H1 (cell line): ENCODE measurements at regions of chrX and their contacts with region 1.

Region 1: DNA sequence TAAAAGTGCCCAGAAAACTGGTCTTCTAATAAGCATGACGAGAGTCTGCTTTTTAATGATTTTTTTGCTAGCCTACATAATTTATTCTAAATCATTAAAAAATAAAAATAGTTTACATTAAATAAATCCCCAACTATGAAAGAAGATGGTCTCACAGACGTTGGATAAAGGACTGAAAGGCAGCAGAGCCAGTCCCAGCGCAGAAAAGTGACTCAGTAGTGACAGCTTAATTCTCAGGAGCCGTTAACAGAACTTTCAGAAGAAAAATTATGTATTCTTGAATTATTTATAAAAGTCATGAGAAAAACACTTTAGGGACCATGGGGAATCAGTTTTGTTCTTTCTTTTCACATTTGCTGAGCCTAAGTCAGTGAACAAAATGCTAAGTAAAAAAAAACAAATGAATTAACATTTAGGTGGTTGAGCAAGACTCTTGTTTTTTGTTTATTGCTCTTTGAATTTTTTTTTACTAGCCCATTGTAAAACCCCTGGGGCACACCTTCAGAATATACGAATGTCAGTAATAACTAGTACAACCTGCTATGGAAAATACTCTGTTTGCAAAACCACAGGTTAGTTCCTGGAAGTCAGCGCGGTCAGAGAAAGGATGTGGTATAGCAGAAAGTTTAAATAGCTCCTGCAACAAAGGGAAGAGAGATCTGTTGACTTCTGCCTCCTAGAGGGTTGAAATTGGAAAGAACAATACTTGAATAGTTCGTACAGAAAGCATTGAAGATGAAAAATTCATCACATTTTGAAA is 50.4 kb upstream of the CCDC160 start:
- DNase-seq: no peak
- H3K4me3 ChIP-seq: no peak overlapping the region
- H3K27ac ChIP-seq: no peak overlapping the region
- H3K4me1 ChIP-seq: peaks cover 0 to 8% (median 4%) of the 10 kb centered on the region in 4 experiments; a peak in 3 of 7 replicates
- H3K27me3 ChIP-seq: no peaks in the 10 kb centered on the region; a peak in 1 of 7 replicates
- CTCF ChIP-seq: no peak
- EP300 ChIP-seq: no peak
- POLR2A ChIP-seq: no peak
- RAD21 ChIP-seq: no peak

Region 2: DNA sequence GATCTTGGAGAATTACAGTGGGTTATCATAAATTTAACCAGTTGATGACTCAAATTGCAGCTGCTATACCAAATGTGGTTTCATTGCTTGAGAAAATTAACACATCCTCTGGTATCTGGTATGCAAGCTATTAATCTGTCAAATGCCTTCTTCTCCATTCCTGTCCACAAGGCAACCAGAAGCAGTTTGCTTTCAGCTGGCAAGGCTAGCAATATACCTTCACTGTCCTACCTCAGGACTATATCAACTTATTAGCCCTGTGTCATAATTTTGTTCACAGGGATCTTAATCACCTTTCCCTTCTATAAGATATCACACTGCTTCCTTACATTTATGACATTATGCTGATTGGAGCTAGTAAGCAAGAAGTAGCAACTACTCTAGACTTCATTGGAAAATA is 91.2 kb before region 1 on chrX:
- CTCF ChIA-PET with region 1: no interaction called
- POLR2A ChIA-PET with region 1: no interaction called
- DNase-seq: no peak
- H3K4me3 ChIP-seq: no peak overlapping the region
- H3K27ac ChIP-seq: no peak overlapping the region
- H3K4me1 ChIP-seq: no peaks in the 10 kb centered on the region
- H3K27me3 ChIP-seq: no peaks in the 10 kb centered on the region
- CTCF ChIP-seq: no peak
- EP300 ChIP-seq: no peak
- POLR2A ChIP-seq: no peak
- RAD21 ChIP-seq: no peak

Region 3: DNA sequence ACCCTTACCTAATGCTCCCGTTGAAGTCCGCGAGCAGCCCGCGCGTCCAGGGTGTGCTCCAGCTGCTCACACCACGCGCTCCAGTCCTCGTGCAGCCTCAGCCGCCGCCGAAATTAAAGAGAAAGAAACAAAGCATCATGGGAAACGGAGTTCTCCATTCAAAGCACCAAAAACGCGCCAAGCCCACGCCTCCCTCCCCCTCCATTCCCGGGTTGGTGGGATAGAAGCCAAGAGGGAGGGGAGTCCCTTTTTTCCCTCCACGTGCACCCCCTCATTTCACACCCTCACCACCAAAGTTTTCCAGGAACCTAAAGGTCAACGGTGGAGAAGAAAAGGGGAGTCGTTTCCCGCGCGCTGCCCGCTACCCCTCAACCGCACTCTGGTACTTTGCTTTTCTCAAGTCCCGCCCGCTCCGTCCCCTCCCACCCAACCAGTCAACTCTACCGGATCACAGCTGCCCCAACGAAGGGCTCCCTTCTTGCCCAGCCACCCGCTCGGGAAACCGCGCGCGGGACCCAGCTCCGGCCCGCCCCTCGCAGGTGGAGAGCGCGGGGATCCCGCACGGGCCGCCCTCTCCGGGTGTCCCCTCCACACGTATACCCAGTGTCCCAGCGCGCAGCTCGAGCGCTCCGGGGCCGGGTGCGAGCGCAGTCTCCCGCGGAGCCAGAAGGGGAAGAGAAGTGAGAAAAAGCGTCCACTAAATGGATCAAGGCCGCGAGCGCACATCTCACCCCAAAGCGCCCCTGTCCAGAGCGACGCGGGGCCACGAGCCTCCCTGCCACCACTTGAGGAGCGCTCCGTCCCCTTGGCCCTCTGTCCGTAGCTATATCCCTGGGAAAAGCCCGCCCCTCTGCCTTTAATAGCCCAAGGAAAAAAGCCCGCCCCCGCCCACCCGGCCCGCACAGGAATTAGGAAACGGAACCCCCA is 14.6 kb before region 1 on chrX:
- CTCF ChIA-PET with region 1: no interaction called
- POLR2A ChIA-PET with region 1: interaction called, 11 read pairs
- DNase-seq: no peak
- H3K4me3 ChIP-seq: peak overlapping the region; percentile 71 to 100 (median 80)
- H3K27ac ChIP-seq: peak overlapping the region; percentile 73; the same call in 1 of the 2 replicates
- H3K4me1 ChIP-seq: peaks cover 0 to 13% (median 5%) of the 10 kb centered on the region in 4 experiments; a peak in 4 of 7 replicates
- H3K27me3 ChIP-seq: no peaks in the 10 kb centered on the region
- CTCF ChIP-seq: no peak
- EP300 ChIP-seq: no peak
- POLR2A ChIP-seq: peak in 1 of 2 experiments; percentile 19; a peak in 1 of 3 replicates
- RAD21 ChIP-seq: no peak

Region 4: DNA sequence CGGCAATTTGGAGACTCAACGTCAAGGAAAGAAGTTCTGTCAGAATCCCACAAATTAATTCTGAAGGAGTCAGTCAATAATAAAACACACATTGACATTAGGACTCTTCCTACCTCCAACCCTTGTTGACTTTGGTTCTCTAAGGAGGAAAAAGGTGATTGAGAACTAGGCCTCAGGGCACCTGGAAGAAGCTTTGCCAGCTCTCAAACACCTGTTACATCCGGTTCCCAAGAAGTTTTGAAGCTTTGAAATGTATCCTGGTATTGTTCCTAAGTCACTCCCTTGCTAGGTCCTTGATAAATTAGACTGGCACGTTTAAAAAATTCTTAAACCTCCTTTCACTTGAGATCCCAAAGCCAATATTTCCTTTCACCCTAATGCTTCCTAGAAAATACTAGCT is 48.7 kb after region 1 on chrX:
- CTCF ChIA-PET with region 1: no interaction called
- POLR2A ChIA-PET with region 1: no interaction called
- DNase-seq: no peak
- H3K4me3 ChIP-seq: no peak overlapping the region
- H3K27ac ChIP-seq: no peak overlapping the region
- H3K4me1 ChIP-seq: peaks cover under 1 to 8% (median 2%) of the 10 kb centered on the region in 4 experiments; a peak in 4 of 7 replicates
- H3K27me3 ChIP-seq: no peaks in the 10 kb centered on the region
- CTCF ChIP-seq: no peak
- EP300 ChIP-seq: no peak
- POLR2A ChIP-seq: no peak
- RAD21 ChIP-seq: no peak